ENCODE measurements at regions of chr12 and their contacts with region 1.

Region 1: GRCh38 chr12:71610031-71610795 is 53.4 kb downstream of the ZFC3H1 start:
- H3K4me3 Mint-ChIP-seq: no peak overlapping the region
- H3K27ac Mint-ChIP-seq: peak overlapping the region; percentile 68
- H3K4me1 Mint-ChIP-seq: peaks cover 8% of the 10 kb centered on the region
- H3K27me3 Mint-ChIP-seq: no peaks in the 10 kb centered on the region

Region 2: GRCh38 chr12:71242511-71242910 is 367.7 kb before region 1 on chr12:
- intact Hi-C with region 1: no loop called
- H3K4me3 Mint-ChIP-seq: no peak overlapping the region
- H3K27ac Mint-ChIP-seq: no peak overlapping the region
- H3K4me1 Mint-ChIP-seq: no peaks in the 10 kb centered on the region
- H3K27me3 Mint-ChIP-seq: no peaks in the 10 kb centered on the region

Region 3: GRCh38 chr12:71652656-71653055 is 42.4 kb after region 1 on chr12:
- intact Hi-C with region 1: loop called (anchors 5 kb)
- H3K4me3 Mint-ChIP-seq: no peak overlapping the region
- H3K27ac Mint-ChIP-seq: no peak overlapping the region
- H3K4me1 Mint-ChIP-seq: peaks cover 32% of the 10 kb centered on the region
- H3K27me3 Mint-ChIP-seq: no peaks in the 10 kb centered on the region